ENCODE measurements at regions of chr5 and their contacts with region 1.

Region 1: DNA sequence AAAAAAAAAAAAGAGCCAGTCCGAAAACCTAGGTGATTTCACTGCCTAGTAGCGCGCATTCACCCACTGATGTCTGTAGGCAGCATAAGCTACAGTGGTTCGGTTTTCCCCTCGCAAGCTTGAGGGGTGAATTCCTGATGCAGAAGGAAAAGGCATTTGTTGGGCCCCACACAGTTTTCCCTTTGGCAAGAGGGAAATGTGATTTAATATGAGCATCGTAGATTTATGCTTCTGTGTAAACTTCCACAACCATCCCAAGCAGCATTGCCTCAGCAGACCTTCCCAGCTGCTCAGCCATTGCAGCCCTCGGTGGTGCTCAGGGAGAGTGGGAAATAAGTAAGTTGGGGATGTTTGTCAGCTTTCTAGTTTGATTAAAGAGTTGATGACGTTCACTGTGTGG is 231.5 kb upstream of the PPP1R2B start:
- DNase-seq: no peak
- H3K4me3 ChIP-seq: no peak overlapping the region
- CTCF ChIP-seq: no peak
- POLR2A ChIP-seq: no peak

Region 2: GRCh38 chr5:156582193-156582598 is 36.4 kb before region 1 on chr5:
- intact Hi-C with region 1: loop called (anchors 2 kb)
- DNase-seq: no peak
- H3K4me3 ChIP-seq: no peak overlapping the region
- CTCF ChIP-seq: no peak
- POLR2A ChIP-seq: no peak

Region 3: GRCh38 chr5:156879665-156880285 is 261.2 kb after region 1 on chr5:
- intact Hi-C with region 1: no loop called
- DNase-seq: no peak
- H3K4me3 ChIP-seq: no peak overlapping the region
- CTCF ChIP-seq: no peak
- POLR2A ChIP-seq: no peak

Measured in lower leg skin (tissue), 4 donors.